ENCODE measurements at regions of chr3 and their contacts with region 1.

Region 1: DNA sequence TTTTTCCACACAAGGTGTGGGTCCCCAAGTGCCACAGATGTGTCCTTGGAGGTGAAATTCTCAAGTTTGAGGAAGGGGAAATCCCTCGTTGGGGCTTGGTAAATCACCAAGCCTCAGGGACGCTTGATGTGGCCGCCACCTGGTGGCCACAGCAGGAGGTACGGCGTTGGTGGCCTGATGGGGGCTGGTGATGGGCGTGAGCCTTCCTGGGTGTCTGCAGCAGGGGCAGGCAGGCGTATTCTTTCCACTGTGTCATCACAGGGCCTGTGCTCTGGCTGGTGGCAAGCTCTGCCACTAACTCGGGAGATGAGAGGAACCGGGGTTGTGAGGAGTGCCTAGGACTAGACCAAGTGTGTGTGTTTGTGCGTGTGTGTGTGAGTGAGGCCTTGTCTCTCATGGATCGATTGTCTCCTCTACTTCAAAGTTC is 4.2 kb downstream of the ACOX2 start:
- DNase-seq: peak; percentile 74 to 81
- H3K4me3 ChIP-seq: no peak overlapping the region
- H3K4me3 Mint-ChIP-seq: no peak overlapping the region
- H3K27ac Mint-ChIP-seq: peak overlapping the region; percentile 39
- H3K4me1 ChIP-seq: peaks cover 41% of the 10 kb centered on the region
- H3K4me1 Mint-ChIP-seq: peaks cover 34% of the 10 kb centered on the region
- H3K27me3 ChIP-seq: no peaks in the 10 kb centered on the region
- H3K27me3 Mint-ChIP-seq: no peaks in the 10 kb centered on the region
- CTCF ChIP-seq: peak; percentile 86 to 94

Region 2: DNA sequence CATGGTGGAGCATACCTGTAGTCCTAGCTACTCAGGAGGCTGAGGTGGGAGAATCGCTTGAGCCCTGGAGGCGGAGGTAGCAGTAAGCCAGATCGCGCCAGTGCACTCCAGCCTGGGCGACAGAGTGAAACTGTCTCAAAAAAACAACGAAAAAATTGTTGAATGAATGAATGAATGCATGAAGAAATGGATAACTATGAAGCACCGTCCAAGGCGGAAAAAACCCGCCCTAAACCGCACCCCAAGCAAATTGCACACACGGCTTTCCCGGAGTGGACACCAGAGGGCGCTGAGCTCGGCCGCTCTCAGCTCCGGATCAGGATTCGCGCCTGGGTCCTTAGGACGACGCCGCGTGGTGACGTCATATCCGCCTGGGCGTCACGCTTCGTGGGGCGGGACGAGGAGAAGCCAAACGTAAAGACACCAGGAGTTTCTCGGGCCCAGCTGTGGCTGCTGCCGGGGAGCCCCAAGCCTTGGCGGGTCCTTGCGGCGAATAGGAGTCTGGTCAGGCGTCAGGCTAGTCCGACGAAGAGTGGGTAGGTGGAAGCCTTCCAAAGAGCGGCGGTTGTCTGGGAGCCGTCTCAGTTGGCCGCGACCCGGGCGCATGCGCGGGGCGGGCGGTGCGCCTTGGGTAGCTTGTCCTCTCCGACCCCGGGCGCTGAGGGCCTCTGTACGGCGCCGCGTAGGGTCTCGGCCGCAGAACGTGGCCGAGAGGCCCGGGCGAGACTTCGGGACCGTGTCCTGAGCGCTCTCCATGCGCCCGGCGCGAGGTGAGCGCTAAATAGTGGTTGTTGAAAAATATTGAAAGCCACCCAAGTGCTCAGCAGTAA is 226.7 kb before region 1 on chr3 and contains the starts of genes HTD2 and RPP14:
- CTCF ChIA-PET with region 1: interaction called, 3 read pairs
- POLR2A ChIA-PET with region 1: no interaction called
- intact Hi-C with region 1: loop called (anchors 2 kb)
- DNase-seq: peak; percentile 96 to 97
- H3K4me3 ChIP-seq: peak within 1 kb of the TSS; percentile 54
- H3K4me3 Mint-ChIP-seq: peak within 1 kb of the TSS; percentile 99
- H3K27ac Mint-ChIP-seq: peak within 1 kb of the TSS; percentile 99
- H3K4me1 ChIP-seq: 0 out of 2 replicates have a peak, but pooled peaks cover 10% of the 10 kb centered on the region
- H3K4me1 Mint-ChIP-seq: peaks cover 7% of the 10 kb centered on the region
- H3K27me3 ChIP-seq: no peaks in the 10 kb centered on the region
- H3K27me3 Mint-ChIP-seq: no peaks in the 10 kb centered on the region
- CTCF ChIP-seq: peak; percentile 74 to 92
- total RNA-seq, gene HTD2: 8.2 and 13.2 TPM in 2 replicates
- total RNA-seq, gene RPP14: 19.2 and 24.7 TPM in 2 replicates

Region 3: GRCh38 chr3:58422756-58423325 is 110.0 kb before region 1 on chr3:
- CTCF ChIA-PET with region 1: interaction called, 3 read pairs
- POLR2A ChIA-PET with region 1: no interaction called
- intact Hi-C with region 1: loop called (anchors 1 kb)
- DNase-seq: peak; percentile 45 to 46
- H3K4me3 ChIP-seq: no peak overlapping the region
- H3K4me3 Mint-ChIP-seq: no peak overlapping the region
- H3K27ac Mint-ChIP-seq: no peak overlapping the region
- H3K4me1 ChIP-seq: peaks cover 13% of the 10 kb centered on the region
- H3K4me1 Mint-ChIP-seq: peaks cover 7% of the 10 kb centered on the region
- H3K27me3 ChIP-seq: no peaks in the 10 kb centered on the region
- H3K27me3 Mint-ChIP-seq: no peaks in the 10 kb centered on the region
- CTCF ChIP-seq: peak; percentile 52 to 65

Region 4: GRCh38 chr3:58471025-58471887 is 61.6 kb before region 1 on chr3:
- CTCF ChIA-PET with region 1: interaction called, 6 read pairs
- POLR2A ChIA-PET with region 1: no interaction called
- intact Hi-C with region 1: loop called (anchors 2 kb)
- DNase-seq: peak; percentile 78 to 86
- H3K4me3 ChIP-seq: no peak overlapping the region
- H3K4me3 Mint-ChIP-seq: no peak overlapping the region
- H3K27ac Mint-ChIP-seq: peak overlapping the region; percentile 73
- H3K4me1 ChIP-seq: peaks cover 35% of the 10 kb centered on the region
- H3K4me1 Mint-ChIP-seq: peaks cover 14% of the 10 kb centered on the region
- H3K27me3 ChIP-seq: no peaks in the 10 kb centered on the region
- H3K27me3 Mint-ChIP-seq: no peaks in the 10 kb centered on the region
- CTCF ChIP-seq: no peak

Region 5: GRCh38 chr3:58520403-58521335 is 12.1 kb before region 1 on chr3:
- CTCF ChIA-PET with region 1: interaction called, 4 read pairs
- POLR2A ChIA-PET with region 1: no interaction called
- intact Hi-C with region 1: loop called (anchors 1 kb)
- DNase-seq: no peak
- H3K4me3 ChIP-seq: no peak overlapping the region
- H3K4me3 Mint-ChIP-seq: no peak overlapping the region
- H3K27ac Mint-ChIP-seq: no peak overlapping the region
- H3K4me1 ChIP-seq: peaks cover 56% of the 10 kb centered on the region
- H3K4me1 Mint-ChIP-seq: peaks cover 22% of the 10 kb centered on the region
- H3K27me3 ChIP-seq: no peaks in the 10 kb centered on the region
- H3K27me3 Mint-ChIP-seq: no peaks in the 10 kb centered on the region
- CTCF ChIP-seq: no peak

Region 6: GRCh38 chr3:58630076-58630709 is 97.4 kb after region 1 on chr3:
- CTCF ChIA-PET with region 1: interaction called, 6 read pairs
- POLR2A ChIA-PET with region 1: no interaction called
- intact Hi-C with region 1: loop called (anchors 1 kb)
- DNase-seq: peak; percentile 73 to 83
- H3K4me3 ChIP-seq: no peak overlapping the region
- H3K4me3 Mint-ChIP-seq: no peak overlapping the region
- H3K27ac Mint-ChIP-seq: no peak overlapping the region
- H3K4me1 ChIP-seq: peaks cover 22% of the 10 kb centered on the region
- H3K4me1 Mint-ChIP-seq: no peaks in the 10 kb centered on the region
- H3K27me3 ChIP-seq: no peaks in the 10 kb centered on the region
- H3K27me3 Mint-ChIP-seq: no peaks in the 10 kb centered on the region
- CTCF ChIP-seq: peak; percentile 85 to 94

Region 7: DNA sequence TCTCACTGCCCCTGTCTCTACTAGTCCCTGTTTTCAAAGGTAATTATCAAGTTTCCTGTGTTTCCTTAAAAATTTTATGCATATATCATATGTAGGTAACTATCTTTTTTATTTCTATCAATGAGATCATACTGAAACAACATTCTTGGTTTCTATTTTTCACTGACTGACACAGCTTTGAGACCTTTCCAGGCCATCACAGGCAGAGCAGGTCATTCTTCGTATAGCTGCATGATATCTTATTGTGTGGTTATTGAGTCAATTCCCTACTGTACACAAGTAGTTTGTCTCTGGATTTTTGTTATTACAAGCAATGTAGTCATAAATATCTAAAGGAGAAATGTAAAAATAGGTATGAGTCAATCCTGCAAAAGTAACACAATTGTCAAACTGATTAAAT is 347.4 kb after region 1 on chr3:
- CTCF ChIA-PET with region 1: no interaction called
- POLR2A ChIA-PET with region 1: no interaction called
- intact Hi-C with region 1: no loop called
- DNase-seq: no peak
- H3K4me3 ChIP-seq: no peak overlapping the region
- H3K4me3 Mint-ChIP-seq: no peak overlapping the region
- H3K27ac Mint-ChIP-seq: no peak overlapping the region
- H3K4me1 ChIP-seq: no peaks in the 10 kb centered on the region
- H3K4me1 Mint-ChIP-seq: no peaks in the 10 kb centered on the region
- H3K27me3 ChIP-seq: no peaks in the 10 kb centered on the region
- H3K27me3 Mint-ChIP-seq: peaks cover 7% of the 10 kb centered on the region
- CTCF ChIP-seq: no peak

Measured in Caco-2 (cell line).